Left cardiac atrium (tissue), 4 donors: ENCODE measurements at regions of chr1 and their contacts with region 1.

Region 1: GRCh38 chr1:151098126-151098525 is 27.6 kb downstream of the GABPB2 start:
- DNase-seq: no peak
- ATAC-seq: no peak

Region 2: GRCh38 chr1:151008190-151008860 is 89.8 kb before region 1 on chr1 and contains the start of gene PRUNE1:
- intact Hi-C with region 1: no loop called
- DNase-seq: peak; percentile 98
- ATAC-seq: peak; percentile 91 to 93
- total RNA-seq, gene PRUNE1: 33.1 to 36.6 TPM

Region 3: GRCh38 chr1:151156515-151156819 is 58.3 kb after region 1 on chr1 and contains the start of gene TNFAIP8L2:
- intact Hi-C with region 1: loop called (anchors 2 to 5 kb)
- DNase-seq: peak; percentile 64
- ATAC-seq: peak; percentile 58 to 74
- total RNA-seq, gene TNFAIP8L2: 2.1 to 5.3 TPM

Region 4: DNA sequence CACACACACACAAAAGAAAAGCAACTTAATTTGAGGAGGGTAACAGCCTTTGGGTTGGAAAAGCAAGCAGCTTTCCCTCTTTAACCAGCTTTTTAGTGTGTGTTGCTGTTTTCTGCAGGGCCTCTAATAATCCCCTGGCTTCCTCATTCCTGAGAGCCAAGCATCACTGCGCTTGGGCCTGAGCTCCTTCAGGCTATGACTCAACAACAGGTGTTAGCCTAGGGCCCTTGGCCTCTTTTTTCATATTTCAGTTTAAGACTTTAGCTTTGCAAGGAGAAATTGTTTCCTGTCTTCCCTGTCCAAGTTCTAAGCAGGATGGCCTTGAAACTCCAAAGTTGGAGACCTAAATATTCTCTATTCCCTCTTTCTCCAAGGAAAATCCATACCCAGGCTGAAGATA is 487.5 kb after region 1 on chr1:
- intact Hi-C with region 1: no loop called
- DNase-seq: no peak
- ATAC-seq: peak; percentile 41 to 78